Panc1 (cell line): ENCODE measurements at regions of chr2 and their contacts with region 1.

Region 1: GRCh38 chr2:48026865-48027264 is 120.6 kb upstream of the FBXO11 start:
- DNase-seq: no peak
- ATAC-seq: no peak
- H3K4me3 ChIP-seq: no peak overlapping the region
- H3K27ac ChIP-seq: no peak overlapping the region
- H3K4me1 ChIP-seq: no peaks in the 10 kb centered on the region
- H3K27me3 ChIP-seq: peaks cover 34% of the 10 kb centered on the region
- CTCF ChIP-seq: no peak

Region 2: DNA sequence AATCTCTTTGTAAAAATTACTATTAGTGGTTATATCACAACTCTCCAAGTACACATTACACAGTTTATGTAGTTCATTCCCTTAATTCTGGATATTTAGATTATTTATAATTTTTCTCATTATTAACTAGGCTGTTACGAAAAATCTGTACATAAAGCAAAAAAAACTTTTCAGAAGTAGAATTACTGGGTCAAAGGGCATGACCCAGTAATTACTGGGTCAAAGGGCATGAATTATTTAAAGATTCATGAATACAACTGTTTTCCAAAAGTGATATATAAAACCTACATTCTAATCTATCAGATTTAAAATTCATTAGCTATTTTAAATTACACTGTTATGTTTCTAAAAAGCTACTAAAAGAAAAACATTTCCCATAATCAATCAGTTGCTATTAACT is 188.6 kb before region 1 on chr2:
- CTCF ChIA-PET with region 1: no interaction called
- POLR2A ChIA-PET with region 1: interaction called, 10 read pairs
- in situ Hi-C with region 1: no loop called
- intact Hi-C with region 1: no loop called
- DNase-seq: no peak
- ATAC-seq: no peak
- H3K4me3 ChIP-seq: no peak overlapping the region
- H3K27ac ChIP-seq: no peak overlapping the region
- H3K4me1 ChIP-seq: no peaks in the 10 kb centered on the region
- H3K27me3 ChIP-seq: no peaks in the 10 kb centered on the region
- CTCF ChIP-seq: no peak